ENCODE measurements at regions of chr12 and their contacts with region 1.

Region 1: DNA sequence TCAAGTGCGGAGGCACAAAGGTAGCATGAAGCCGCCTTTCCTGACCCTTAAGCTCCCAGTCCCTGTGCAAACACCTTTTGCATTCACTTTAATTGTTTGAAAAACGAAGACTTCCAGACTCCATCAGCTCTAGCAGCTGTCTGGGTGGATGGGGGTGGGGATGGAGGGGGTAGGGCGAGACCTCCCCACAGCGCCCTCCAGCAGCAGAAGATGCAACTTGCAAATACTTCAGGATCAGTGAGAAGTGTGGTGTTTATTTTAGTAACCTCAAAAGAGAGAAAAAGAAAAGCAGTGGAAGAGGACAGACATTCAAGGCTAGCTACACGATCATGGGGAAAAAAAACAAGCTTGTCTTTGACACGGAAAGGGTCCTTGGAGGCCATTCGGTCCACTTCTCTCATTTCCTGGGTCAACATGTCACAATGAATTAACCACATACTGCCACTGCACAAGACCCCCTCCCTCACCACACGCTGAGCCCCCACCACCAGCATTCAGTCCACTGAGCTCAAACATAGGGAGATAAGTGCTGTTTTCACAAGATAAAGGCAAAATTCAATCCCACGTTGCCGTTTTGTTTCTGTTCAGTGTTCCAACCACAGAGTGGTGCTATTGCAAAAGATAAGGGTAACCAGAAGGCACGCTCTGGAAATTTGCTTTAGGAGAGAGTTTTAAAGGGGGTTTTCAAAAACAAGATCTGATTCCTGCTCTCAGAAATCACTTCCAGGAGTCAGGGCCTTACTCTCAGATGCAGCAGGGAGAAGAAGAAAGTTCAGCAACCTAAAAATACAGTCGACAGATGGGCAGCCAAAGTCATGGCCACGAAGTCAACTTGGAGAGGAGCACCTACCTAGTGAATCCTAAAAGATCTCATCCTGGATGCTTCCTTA is 3.3 kb upstream of the NTF3 start:
- DNase-seq: no peak
- ATAC-seq: peak in 1 of 4 donors; percentile 27
- H3K4me3 ChIP-seq: no peak overlapping the region
- H3K27ac ChIP-seq: no peak overlapping the region
- H3K4me1 ChIP-seq: peaks cover 0 to 51% (median 18%) of the 10 kb centered on the region in 12 donors
- H3K27me3 ChIP-seq: peaks cover 9 to 61% (median 39%) of the 10 kb centered on the region in 9 donors
- CTCF ChIP-seq: peak; percentile 15 to 67 (median 54)
- POLR2A ChIP-seq: no peak

Region 2: GRCh38 chr12:5506821-5507231 is 78.2 kb after region 1 on chr12:
- intact Hi-C with region 1: loop called in 5 of 10 experiments (anchors 2 to 10 kb)
- DNase-seq: peak in 4 of 5 donors; percentile 57 to 80 (median 66)
- ATAC-seq: peak; percentile 57 to 90 (median 72)
- H3K4me3 ChIP-seq: no peak overlapping the region
- H3K27ac ChIP-seq: no peak overlapping the region
- H3K4me1 ChIP-seq: peaks cover 0 to 29% (median 13%) of the 10 kb centered on the region in 12 donors
- H3K27me3 ChIP-seq: peaks cover 0 to 6% (median 0%) of the 10 kb centered on the region in 9 donors
- CTCF ChIP-seq: no peak
- POLR2A ChIP-seq: no peak

Region 3: DNA sequence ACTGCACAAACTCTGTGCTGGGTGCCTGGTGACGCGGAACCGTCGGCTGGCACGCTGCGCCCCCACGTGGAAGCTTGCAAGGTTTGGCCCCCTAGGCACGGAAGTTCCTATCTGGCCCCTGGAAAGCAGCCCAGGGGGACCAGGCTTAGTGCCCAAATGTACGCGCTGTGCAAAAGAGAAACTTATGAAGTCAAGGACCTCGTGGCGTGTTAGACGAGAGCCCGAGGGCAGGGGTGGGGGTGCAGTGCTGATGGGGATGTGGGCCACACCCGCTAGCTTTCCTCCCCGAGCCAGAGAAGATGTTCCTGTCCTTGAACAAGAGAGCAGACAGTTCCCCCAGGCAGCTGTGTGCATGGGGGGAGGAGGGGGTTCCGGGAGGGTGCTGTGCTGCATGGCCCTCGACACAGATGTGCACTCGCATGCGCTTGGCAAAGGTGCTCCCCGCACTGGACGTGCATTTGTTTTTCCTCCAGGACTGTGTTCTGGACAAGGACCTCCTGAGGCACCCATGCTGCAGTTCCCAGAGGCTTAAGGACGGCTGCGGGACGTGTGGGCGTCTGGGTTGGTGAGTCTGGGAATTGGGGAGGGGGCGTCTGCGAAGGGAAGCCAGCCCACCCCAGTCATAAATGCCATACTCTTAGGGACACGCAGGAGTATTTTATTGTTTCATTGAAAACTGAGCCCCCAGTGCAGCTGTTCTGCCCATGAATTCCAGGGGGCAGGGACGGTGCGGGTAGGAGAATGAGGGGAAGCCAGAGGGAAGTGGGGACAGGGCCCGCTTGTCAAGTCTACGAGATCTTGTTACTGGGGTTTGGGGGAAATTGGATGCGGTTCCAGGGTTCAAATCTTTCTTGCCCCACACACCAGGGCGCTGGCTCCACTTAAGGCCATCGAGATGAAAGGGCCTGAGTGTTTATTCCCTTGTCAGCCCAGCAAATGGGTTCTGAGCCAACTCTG is 83.3 kb after region 1 on chr12:
- intact Hi-C with region 1: loop called in 5 of 10 experiments (anchors 2 to 10 kb)
- DNase-seq: peak in 2 of 5 donors; percentile 31 to 35
- ATAC-seq: peak; percentile 20 to 58 (median 36)
- H3K4me3 ChIP-seq: peak overlapping the region in 2 of 12 donors; percentile 8 to 22
- H3K27ac ChIP-seq: no peak overlapping the region
- H3K4me1 ChIP-seq: peaks cover 0 to 23% (median 11%) of the 10 kb centered on the region in 12 donors
- H3K27me3 ChIP-seq: peaks cover 0 to 8% (median 0%) of the 10 kb centered on the region in 9 donors
- CTCF ChIP-seq: peak; percentile 23 to 61 (median 46)
- POLR2A ChIP-seq: no peak

Region 4: DNA sequence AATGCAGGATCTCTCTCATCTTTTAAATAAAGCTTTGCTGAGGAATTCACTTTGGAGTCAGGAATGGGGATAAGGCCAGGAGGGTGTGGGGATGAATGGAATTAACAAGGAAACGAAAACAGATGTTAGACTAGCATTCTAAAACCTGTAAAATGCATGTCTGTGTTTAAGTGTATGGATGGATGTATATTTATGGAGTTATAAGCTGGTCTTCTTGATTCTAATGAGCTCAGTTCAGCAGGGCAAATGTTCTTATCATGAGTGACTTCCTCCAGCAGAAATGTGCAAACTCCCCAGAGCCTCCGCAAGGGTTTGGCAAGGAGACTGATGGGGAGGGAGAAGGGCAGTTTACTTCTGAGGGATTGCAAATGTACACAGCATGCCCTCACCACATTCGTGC is 152.4 kb after region 1 on chr12:
- intact Hi-C with region 1: loop called in 1 of 10 experiments (anchors 5 kb)
- DNase-seq: peak in 1 of 5 donors; percentile 43
- ATAC-seq: peak in 2 of 4 donors; percentile 35 to 37
- H3K4me3 ChIP-seq: no peak overlapping the region
- H3K27ac ChIP-seq: peak overlapping the region; percentile 40 to 82 (median 61)
- H3K4me1 ChIP-seq: peaks cover 12 to 80% (median 51%) of the 10 kb centered on the region in 12 donors
- H3K27me3 ChIP-seq: no peaks in the 10 kb centered on the region
- CTCF ChIP-seq: no peak
- POLR2A ChIP-seq: no peak

Region 5: DNA sequence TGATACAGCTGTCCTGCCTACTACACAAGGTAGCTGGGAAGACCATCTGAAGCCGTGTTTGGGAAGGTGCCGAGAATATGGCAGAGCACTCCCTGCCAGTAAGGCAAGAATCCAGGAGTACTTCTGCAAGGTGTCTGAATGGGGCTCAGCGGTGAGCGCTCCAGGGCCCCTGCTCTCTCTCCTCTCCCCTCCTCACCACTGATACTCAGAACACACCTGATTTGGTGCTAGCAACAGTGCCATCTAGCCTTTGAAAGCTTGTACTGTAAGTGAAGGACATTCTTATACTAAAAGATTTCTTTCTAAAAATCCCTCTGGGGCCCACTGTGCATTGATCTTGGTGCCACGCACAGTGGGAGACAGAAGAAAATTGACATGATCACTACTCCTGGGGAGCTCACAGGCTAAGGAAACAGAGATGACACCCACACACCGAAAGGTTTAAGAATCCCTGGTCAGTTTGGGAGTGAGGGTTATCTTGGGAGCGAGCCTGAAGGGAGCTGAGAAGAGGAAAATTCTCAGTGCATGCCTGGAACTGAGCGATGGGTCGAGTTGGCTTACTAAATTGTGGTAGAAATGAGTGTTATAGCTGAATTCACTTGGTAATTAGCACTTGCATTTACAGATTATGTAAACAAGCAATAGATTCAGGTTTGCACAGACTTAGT is 220.2 kb after region 1 on chr12:
- intact Hi-C with region 1: loop called in 8 of 10 experiments (anchors 5 to 10 kb)
- DNase-seq: no peak
- ATAC-seq: peak in 3 of 4 donors; percentile 71 to 75 (median 71)
- H3K4me3 ChIP-seq: no peak overlapping the region
- H3K27ac ChIP-seq: no peak overlapping the region
- H3K4me1 ChIP-seq: peaks cover 0 to 11% (median 0%) of the 10 kb centered on the region in 12 donors
- H3K27me3 ChIP-seq: peaks cover 0 to 14% (median 0%) of the 10 kb centered on the region in 9 donors
- CTCF ChIP-seq: peak; percentile 22 to 69 (median 50)
- POLR2A ChIP-seq: no peak

Region 6: GRCh38 chr12:5796171-5796958 is 367.8 kb after region 1 on chr12:
- intact Hi-C with region 1: loop called in 8 of 10 experiments (anchors 2 to 10 kb)
- DNase-seq: peak; percentile 23 to 71 (median 34)
- ATAC-seq: peak in 3 of 4 donors; percentile 68 to 81 (median 75)
- H3K4me3 ChIP-seq: no peak overlapping the region
- H3K27ac ChIP-seq: no peak overlapping the region
- H3K4me1 ChIP-seq: peaks cover 0 to 9% (median 0%) of the 10 kb centered on the region in 12 donors
- H3K27me3 ChIP-seq: no peaks in the 10 kb centered on the region
- CTCF ChIP-seq: peak; percentile 32 to 70 (median 56)
- POLR2A ChIP-seq: no peak

Region 7: DNA sequence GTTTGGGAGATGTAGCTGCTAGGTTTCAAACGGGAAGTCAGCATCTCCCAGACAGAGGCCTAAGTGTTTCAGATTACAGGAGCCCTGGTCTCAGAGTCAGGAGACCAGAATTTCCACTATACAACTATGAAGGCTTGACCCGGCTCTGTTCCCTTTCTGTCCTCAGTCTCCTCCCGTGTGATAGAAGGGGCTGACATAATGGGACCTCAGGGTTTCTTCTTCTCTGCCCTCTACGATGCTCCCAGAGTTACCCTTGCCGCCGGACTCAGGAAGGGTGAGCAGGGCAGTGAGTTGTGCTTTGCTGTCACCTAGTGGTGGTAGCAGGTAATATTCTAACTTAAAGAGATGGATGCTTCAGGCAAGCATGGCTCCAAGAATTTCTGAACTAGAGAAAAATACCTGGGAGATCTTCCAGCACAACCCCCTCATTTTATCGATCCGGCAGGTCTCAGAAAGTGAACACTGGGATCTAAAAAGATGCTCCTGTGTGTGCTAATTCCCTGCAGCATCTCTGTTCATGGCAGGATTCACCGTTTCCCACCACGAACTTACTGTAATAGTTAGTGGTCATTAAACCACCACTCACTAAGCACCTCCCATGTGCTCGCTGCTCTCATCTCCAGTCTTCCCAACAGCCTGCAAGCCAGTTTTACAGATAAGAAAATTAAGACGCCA is 611.5 kb after region 1 on chr12:
- intact Hi-C with region 1: loop called in 2 of 10 experiments (anchors 10 kb)
- DNase-seq: peak in 3 of 5 donors; percentile 50 to 59 (median 55)
- ATAC-seq: peak; percentile 49 to 79 (median 72)
- H3K4me3 ChIP-seq: no peak overlapping the region
- H3K27ac ChIP-seq: no peak overlapping the region
- H3K4me1 ChIP-seq: peaks cover 0 to 4% (median 0%) of the 10 kb centered on the region in 12 donors
- H3K27me3 ChIP-seq: no peaks in the 10 kb centered on the region
- CTCF ChIP-seq: peak; percentile 74 to 90 (median 84)
- POLR2A ChIP-seq: no peak